ENCODE measurements at regions of chr6 and their contacts with region 1.

Region 1: DNA sequence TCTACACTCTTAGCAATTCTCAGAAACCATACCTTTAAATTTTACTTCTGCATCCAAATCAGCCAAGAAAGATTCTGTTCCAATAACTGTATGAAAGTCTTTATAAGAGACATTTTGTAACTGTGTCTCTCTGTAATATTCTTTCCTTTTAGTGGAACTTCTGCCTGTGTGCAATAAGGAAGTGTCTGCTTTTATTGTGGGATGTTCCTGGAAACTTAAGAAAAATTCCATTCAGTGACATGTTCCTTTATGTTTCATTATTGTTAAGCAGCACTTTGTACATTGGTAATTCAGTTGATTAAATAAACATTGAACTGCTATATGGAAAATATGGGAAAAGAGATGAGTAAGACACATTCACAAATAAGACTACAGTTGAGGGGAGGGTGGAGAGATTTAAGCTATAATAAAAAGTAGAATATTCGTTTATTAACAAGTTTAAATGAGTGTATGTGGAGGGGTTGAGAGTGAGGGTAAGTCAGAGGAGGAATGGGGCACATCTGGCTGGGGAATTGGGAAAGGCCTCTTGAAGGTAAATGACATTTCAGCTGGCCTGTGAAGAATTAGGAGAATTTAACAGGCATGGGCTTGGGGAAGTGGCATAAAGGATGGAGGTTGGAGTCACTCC is 11.9 kb downstream of the NUS1 start:
- DNase-seq: no peak

Region 2: GRCh38 chr6:116060572-116061283 is 1626.4 kb before region 1 on chr6 and contains the start of gene FRK:
- intact Hi-C with region 1: no loop called
- DNase-seq: no peak
- total RNA-seq, gene FRK: 5.1 to 8.3 TPM

Region 3: DNA sequence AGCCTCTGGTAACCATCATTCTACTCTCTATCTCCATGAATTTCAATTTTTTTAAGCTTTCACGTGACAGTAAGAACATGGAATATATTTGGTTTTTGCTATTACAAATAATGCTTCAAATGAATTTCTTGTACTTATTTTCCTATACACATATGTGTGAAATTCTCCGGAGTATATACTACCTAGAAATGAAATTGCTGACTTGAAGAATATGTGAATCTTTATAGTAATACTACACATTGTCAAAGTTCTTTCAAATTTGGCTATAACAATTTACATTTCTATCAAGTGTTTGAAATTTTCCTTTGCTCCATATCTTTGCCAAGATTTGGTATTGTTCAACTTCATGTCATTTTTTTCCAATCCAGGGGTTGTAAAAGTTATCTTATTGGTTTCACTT is 433.4 kb before region 1 on chr6:
- intact Hi-C with region 1: no loop called
- DNase-seq: no peak

Region 4: GRCh38 chr6:117498159-117498558 is 189.0 kb before region 1 on chr6:
- intact Hi-C with region 1: no loop called
- DNase-seq: no peak

Region 5: GRCh38 chr6:119423996-119424395 is 1736.9 kb after region 1 on chr6:
- intact Hi-C with region 1: loop called in 1 of 2 experiments (anchors 5 kb)
- DNase-seq: no peak